ENCODE measurements at regions of chr11 and their contacts with region 1.

Region 1: DNA sequence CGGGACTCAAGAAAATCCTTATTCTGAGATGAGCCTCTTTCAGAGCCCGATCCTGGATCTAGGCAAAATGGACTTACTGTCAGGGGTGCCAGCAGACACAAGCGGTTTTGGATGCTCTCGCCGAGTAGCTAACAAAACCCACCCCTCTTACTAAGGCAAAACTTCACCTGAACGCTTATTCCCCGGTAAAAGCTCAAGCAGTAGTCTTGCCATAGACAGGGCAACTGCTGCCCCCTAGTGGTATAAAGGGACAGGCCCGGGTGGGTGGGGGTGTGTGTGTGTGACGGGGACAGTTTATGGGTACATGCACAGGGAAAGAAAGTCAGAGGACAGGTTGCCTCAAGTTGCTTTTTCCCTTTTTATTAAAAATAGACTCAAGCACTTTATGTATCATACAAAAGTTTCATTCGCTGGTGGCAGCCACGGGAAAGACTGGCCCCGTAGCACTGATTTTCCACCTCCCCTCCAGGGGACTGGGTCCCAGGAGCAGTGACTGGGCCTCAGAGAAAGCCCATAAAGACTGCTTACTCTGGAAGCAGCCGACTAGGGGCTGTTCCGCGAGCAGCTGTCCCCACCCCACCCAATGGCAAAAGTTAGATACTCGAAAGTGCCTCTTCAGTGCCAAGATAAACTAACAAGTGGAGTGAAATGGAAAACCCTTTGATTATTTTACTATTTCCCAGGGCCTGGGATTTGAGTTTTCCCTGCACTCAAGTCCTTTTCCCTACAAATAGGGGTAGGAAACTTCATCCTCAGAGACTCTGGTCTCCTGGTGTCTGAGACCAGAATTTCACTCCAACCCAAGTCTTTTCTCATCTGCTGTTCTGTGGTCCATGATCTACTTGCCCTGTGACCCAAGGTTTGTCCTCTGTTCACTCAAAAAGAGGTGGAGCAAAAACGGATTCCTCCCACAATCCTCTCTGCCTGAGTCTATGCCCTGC is 4.7 kb downstream of the YPEL4 start:
- DNase-seq: peak; percentile 67 to 90 (median 82)
- ATAC-seq: peak; percentile 67 to 77 (median 67)
- H3K4me3 ChIP-seq: no peak overlapping the region
- H3K4me3 Mint-ChIP-seq: no peak overlapping the region
- H3K27ac ChIP-seq: no peak overlapping the region
- H3K27ac Mint-ChIP-seq: no peak overlapping the region
- H3K4me1 ChIP-seq: peaks cover 29 to 40% of the 10 kb centered on the region in 2 experiments
- H3K4me1 Mint-ChIP-seq: peaks cover 35 to 45% (median 38%) of the 10 kb centered on the region in 3 donors
- H3K27me3 ChIP-seq: peaks cover 9 to 56% of the 10 kb centered on the region in 2 experiments
- H3K27me3 Mint-ChIP-seq: peaks cover 32 to 57% of the 10 kb centered on the region in 2 donors

Region 2: DNA sequence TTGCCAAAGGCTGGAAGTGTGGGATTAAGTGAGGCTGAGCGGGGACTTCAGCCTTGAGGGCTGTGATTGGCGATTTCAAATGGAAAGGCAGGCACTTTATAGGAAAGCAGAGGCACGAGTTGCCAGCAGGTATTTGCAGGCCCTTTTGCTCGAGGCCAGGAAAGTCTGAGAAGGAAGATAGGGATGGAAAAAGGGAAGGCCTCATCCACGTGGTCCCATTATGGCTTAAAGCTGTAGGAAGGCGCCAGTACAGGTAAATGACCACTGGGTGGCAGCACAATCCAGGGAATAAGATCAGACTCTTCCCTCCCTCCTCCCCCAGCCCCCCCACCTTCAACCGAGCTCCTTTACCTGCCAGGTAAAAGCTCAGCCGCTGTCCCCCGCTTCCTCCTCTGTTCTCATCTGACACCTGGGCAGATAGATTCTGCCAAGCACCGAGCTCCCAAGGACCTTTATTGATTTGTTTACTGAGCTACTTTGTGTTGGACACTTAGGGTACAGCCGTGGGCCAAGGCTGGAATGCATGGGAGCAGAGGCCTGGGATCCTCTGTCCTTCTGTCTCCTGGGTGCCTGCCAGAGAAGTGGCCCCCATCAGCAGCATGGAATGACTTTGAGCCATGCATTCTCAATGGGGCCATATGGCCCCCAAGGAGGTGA is 299.3 kb before region 1 on chr11:
- CTCF ChIA-PET with region 1: interaction called, 4 to 13 read pairs
- POLR2A ChIA-PET with region 1: interaction called in 1 of 2 experiments, 3 read pairs
- DNase-seq: peak; percentile 20 to 86 (median 61)
- ATAC-seq: peak; percentile 78 to 89 (median 82)
- H3K4me3 ChIP-seq: no peak overlapping the region
- H3K4me3 Mint-ChIP-seq: no peak overlapping the region
- H3K27ac ChIP-seq: no peak overlapping the region
- H3K27ac Mint-ChIP-seq: no peak overlapping the region
- H3K4me1 ChIP-seq: peaks cover 0 to 11% of the 10 kb centered on the region in 2 experiments
- H3K4me1 Mint-ChIP-seq: peaks cover 0 to 5% (median 5%) of the 10 kb centered on the region in 3 donors
- H3K27me3 ChIP-seq: peaks cover 0 to 9% of the 10 kb centered on the region in 2 experiments
- H3K27me3 Mint-ChIP-seq: no peaks in the 10 kb centered on the region

Region 3: DNA sequence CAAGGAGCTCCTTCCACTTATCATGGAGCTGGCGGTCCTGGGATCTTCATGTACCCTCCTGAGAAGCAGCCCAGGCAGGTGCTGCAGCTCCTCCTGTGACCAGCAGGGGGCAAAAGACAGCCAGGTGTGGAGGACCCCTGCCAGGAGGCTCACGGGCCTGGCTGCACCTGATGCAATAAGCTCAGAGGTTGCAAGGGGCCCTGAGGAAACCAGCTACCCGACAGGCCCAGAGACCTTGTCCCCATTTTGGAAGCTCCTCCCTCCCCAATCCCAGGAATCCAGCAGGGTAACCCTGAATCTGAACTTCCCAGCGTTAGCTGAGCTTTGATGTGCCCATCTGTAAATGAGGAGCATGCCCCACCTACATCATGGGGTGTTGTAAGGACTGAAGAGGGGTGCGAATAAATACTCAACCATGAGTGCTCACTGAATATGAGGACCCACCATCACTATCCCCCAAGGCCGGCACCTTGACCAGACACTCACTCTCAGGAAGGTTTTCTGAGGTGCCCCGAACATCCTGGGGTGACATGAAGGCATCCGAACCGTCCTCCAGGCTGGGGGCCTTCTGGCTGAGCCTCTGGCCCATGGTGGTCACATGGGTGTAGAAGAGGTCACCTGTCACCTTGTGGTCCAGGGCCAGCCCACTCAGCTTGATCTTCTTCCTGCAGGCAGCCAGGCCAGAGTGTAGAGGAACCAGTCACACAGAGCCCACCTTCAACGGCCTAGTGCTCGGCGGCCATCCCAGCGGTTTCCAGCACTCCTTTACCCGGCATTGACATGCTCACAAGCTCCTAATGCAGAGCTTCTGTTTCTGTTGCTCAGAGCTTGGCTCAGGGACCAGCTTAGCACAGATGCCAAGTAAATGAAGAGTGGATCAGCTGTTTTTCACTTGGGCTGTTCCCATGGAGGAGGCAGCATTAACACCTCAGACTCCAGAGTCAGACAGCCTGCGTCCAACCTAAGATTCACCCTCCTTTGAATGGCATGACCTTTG is 151.2 kb before region 1 on chr11:
- CTCF ChIA-PET with region 1: interaction called, 24 read pairs
- POLR2A ChIA-PET with region 1: interaction called in 1 of 2 experiments, 4 read pairs
- DNase-seq: peak; percentile 34 to 80 (median 64)
- ATAC-seq: peak; percentile 89 to 92 (median 91)
- H3K4me3 ChIP-seq: no peak overlapping the region
- H3K4me3 Mint-ChIP-seq: no peak overlapping the region
- H3K27ac ChIP-seq: no peak overlapping the region
- H3K27ac Mint-ChIP-seq: peak overlapping the region; percentile 19 to 39
- H3K4me1 ChIP-seq: peaks cover 0 to 3% of the 10 kb centered on the region in 2 experiments
- H3K4me1 Mint-ChIP-seq: peaks cover 0 to 3% (median 0%) of the 10 kb centered on the region in 3 donors
- H3K27me3 ChIP-seq: peaks cover 0 to 7% of the 10 kb centered on the region in 2 experiments
- H3K27me3 Mint-ChIP-seq: no peaks in the 10 kb centered on the region

Region 4: DNA sequence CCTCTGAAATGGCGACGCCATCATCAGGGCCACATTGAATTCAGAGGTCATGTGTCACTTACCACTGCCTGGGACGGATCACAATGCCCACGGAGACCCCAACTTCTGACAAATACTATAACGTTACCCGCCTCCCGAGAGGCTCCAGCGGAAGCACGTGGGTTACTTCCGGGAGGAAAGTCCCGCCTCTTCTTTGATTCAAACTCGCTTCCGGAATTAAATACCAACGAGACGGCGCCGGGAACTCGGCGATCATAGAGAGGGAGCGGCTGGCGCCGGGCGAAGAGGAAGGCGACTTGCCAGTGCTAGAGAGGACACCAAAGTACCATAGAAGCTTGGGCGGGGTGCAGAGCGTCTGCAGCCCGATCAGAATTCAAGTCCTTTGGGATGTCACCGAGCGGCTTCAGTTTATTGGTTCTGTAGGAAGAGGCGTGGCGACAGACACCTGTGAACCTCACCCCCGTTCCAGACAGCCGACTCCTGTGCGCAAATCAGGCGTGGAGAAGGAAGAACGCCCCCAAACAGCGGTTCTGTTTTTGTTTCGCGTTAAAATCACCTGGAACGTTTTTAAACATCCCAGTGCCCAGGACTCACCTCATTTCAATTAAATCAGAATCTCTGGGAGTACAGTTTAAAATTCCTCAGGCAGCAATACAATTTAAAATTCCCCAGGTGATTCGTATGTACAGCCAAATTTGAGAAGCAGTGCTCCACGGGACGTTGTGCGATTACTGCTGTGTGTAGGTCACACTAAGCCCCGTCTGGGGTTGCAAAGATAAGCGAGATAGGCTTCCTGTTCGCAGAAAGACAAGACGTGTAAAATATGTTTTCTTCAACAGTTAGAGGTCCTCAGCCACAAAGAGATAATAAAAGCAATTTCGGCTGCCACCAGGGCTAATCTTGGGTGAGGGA is 114.2 kb before region 1 on chr11 and contains the start of gene TIMM10:
- CTCF ChIA-PET with region 1: interaction called, 5 to 11 read pairs
- POLR2A ChIA-PET with region 1: no interaction called
- DNase-seq: peak; percentile 81 to 97 (median 91)
- ATAC-seq: peak; percentile 94 to 95 (median 94)
- H3K4me3 ChIP-seq: peak within 1 kb of the TSS; percentile 75 to 84
- H3K4me3 Mint-ChIP-seq: peak within 1 kb of the TSS; percentile 89 to 97 (median 91)
- H3K27ac ChIP-seq: peak within 1 kb of the TSS; percentile 83
- H3K27ac Mint-ChIP-seq: peak within 1 kb of the TSS; percentile 96
- H3K4me1 ChIP-seq: peaks cover 10 to 20% of the 10 kb centered on the region in 2 experiments
- H3K4me1 Mint-ChIP-seq: peaks cover 32 to 38% (median 37%) of the 10 kb centered on the region in 3 donors
- H3K27me3 ChIP-seq: no peaks in the 10 kb centered on the region
- H3K27me3 Mint-ChIP-seq: no peaks in the 10 kb centered on the region
- total RNA-seq, gene TIMM10: 20.7 to 33.2 (median 26.2) TPM

Region 5: GRCh38 chr11:57546869-57547475 is 98.0 kb before region 1 on chr11:
- CTCF ChIA-PET with region 1: no interaction called
- POLR2A ChIA-PET with region 1: no interaction called
- DNase-seq: no peak
- ATAC-seq: peak in 1 of 4 experiments; percentile 39
- H3K4me3 ChIP-seq: no peak overlapping the region
- H3K4me3 Mint-ChIP-seq: no peak overlapping the region
- H3K27ac ChIP-seq: peak overlapping the region; percentile 34
- H3K27ac Mint-ChIP-seq: peak overlapping the region; percentile 70 to 79
- H3K4me1 ChIP-seq: peaks cover 0 to 16% of the 10 kb centered on the region in 2 experiments
- H3K4me1 Mint-ChIP-seq: peaks cover 5 to 11% (median 7%) of the 10 kb centered on the region in 3 donors
- H3K27me3 ChIP-seq: no peaks in the 10 kb centered on the region
- H3K27me3 Mint-ChIP-seq: no peaks in the 10 kb centered on the region

Region 6: DNA sequence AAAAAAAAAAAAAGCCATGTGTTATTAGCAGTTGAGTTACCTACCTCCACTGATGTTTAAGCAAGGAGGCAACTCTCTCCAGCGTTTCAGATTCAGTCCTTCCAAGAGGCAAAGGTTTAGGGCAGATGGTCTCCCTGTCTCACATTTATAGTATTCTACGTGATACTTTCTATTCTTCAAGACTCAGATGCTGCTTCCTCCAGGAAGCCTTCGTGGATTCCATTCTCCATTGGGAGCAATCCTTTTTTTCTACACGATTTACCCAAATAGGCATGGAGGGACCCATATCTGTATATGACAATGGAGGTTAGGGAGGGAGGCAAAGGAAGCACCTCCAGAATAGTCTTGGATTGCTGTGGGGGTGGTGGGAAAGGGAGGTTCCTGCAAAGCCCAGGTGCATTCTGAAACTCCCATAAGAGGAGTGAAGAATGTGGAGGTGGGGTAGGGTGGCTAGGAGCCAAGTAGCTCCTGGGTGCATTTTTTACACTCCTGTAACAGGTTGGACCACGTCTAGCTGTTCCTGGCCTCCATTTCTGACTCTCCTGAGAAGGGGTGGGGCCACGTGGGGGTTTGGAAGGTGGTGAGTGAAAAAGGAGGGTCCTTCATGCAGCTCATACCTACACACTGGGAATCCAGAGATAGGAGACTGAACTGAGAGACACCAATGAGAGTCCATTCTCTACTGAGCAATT is 11.5 kb before region 1 on chr11:
- CTCF ChIA-PET with region 1: interaction called, 8 to 16 read pairs
- POLR2A ChIA-PET with region 1: no interaction called
- DNase-seq: no peak
- ATAC-seq: no peak
- H3K4me3 ChIP-seq: no peak overlapping the region
- H3K4me3 Mint-ChIP-seq: no peak overlapping the region
- H3K27ac ChIP-seq: no peak overlapping the region
- H3K27ac Mint-ChIP-seq: no peak overlapping the region
- H3K4me1 ChIP-seq: peaks cover 0 to 12% of the 10 kb centered on the region in 2 experiments
- H3K4me1 Mint-ChIP-seq: peaks cover 4 to 8% (median 6%) of the 10 kb centered on the region in 3 donors
- H3K27me3 ChIP-seq: peaks cover 0 to 34% of the 10 kb centered on the region in 2 experiments
- H3K27me3 Mint-ChIP-seq: peaks cover 9 to 43% of the 10 kb centered on the region in 2 donors

Region 7: GRCh38 chr11:58133309-58134076 is 488.5 kb after region 1 on chr11:
- CTCF ChIA-PET with region 1: no interaction called
- POLR2A ChIA-PET with region 1: no interaction called
- DNase-seq: no peak
- ATAC-seq: no peak
- H3K4me3 ChIP-seq: no peak overlapping the region
- H3K4me3 Mint-ChIP-seq: no peak overlapping the region
- H3K27ac ChIP-seq: no peak overlapping the region
- H3K27ac Mint-ChIP-seq: no peak overlapping the region
- H3K4me1 ChIP-seq: no peaks in the 10 kb centered on the region
- H3K4me1 Mint-ChIP-seq: no peaks in the 10 kb centered on the region
- H3K27me3 ChIP-seq: no peaks in the 10 kb centered on the region
- H3K27me3 Mint-ChIP-seq: no peaks in the 10 kb centered on the region

Measured in T-cell (primary cell).